ENCODE measurements at regions of chr15 and their contacts with region 1.

Region 1: GRCh38 chr15:34101366-34102175 is at the starts of genes EMC7 and PGBD4:
- DNase-seq: peak; percentile 99
- H3K4me3 ChIP-seq: peak within 1 kb of the TSS; percentile 79
- H3K27ac ChIP-seq: peak within 1 kb of the TSS; percentile 83
- H3K4me1 ChIP-seq: peaks cover 7% of the 10 kb centered on the region
- H3K27me3 ChIP-seq: no peaks in the 10 kb centered on the region
- CTCF ChIP-seq: no peak
- total RNA-seq, gene EMC7: 68.7 and 81.2 TPM in 2 replicates
- total RNA-seq, gene PGBD4: 2.6 and 2.7 TPM in 2 replicates

Region 2: GRCh38 chr15:34011481-34011880 is 90.1 kb before region 1 on chr15:
- CTCF ChIA-PET with region 1: no interaction called
- POLR2A ChIA-PET with region 1: no interaction called
- intact Hi-C with region 1: no loop called
- DNase-seq: no peak
- H3K4me3 ChIP-seq: no peak overlapping the region
- H3K27ac ChIP-seq: no peak overlapping the region
- H3K4me1 ChIP-seq: no peaks in the 10 kb centered on the region
- H3K27me3 ChIP-seq: no peaks in the 10 kb centered on the region
- CTCF ChIP-seq: no peak

Region 3: GRCh38 chr15:34223904-34224596 is 122.5 kb after region 1 on chr15:
- CTCF ChIA-PET with region 1: no interaction called
- POLR2A ChIA-PET with region 1: no interaction called
- intact Hi-C with region 1: loop called (anchors 2 kb)
- DNase-seq: peak; percentile 15
- H3K4me3 ChIP-seq: peak overlapping the region; percentile 69
- H3K27ac ChIP-seq: peak overlapping the region; percentile 91
- H3K4me1 ChIP-seq: peaks cover 8% of the 10 kb centered on the region
- H3K27me3 ChIP-seq: no peaks in the 10 kb centered on the region
- CTCF ChIP-seq: no peak

Region 4: DNA sequence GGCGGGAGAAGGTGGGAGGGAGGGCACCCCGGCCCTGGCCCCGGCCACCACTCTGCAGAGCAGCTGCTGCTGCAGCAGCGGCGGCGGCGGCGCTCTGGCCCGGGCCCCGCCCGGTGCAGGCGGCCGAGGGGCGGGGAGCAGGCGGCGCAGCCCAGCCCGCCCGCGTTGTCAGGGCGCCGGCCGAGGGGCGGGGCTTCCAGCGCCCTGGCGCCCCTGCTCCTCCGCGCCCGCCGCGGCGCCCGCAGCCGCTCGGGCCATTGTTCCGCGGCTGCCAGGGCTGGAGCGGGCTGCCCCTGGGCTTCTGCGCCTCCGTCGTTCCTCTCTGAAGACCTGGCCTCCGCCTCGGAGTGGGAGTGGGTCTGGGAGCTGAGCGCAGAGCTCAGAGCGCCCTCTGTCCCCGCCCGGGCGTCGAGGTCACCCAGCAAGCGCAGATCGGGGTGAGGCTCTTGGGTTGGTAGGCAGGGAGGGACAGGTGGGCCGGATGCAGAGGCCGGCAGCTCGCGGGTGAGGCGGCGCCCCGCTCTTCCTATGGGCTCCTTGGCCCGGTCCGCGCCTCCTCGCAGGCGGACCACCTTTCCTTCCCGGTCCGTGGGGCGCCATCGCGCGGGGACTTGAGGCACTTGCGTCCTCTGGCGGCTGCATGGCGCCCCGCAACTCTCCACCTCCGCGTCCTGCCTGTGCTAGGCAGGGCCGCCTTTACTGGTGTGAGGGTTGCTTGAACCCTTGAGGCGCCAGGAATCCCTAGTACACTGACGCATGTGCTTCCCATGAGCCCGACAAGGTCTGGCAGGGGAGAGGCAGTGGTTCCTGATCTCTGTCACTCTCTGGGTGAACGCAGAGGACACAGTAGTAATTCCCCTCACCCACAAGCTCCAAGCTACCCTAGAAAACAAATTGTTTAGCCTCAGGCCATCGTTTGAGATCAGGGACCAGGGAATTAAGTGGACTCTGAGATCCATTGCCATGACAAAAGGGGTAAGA is 265.8 kb after region 1 on chr15 and contains the start of gene LPCAT4:
- CTCF ChIA-PET with region 1: interaction called, 8 read pairs
- POLR2A ChIA-PET with region 1: no interaction called
- intact Hi-C with region 1: loop called (anchors 10 kb)
- DNase-seq: peak; percentile 92
- H3K4me3 ChIP-seq: peak within 1 kb of the TSS; percentile 82
- H3K27ac ChIP-seq: peak within 1 kb of the TSS; percentile 96
- H3K4me1 ChIP-seq: peaks cover 8% of the 10 kb centered on the region
- H3K27me3 ChIP-seq: no peaks in the 10 kb centered on the region
- CTCF ChIP-seq: peak; percentile 98
- total RNA-seq, gene LPCAT4: 37.8 and 53.1 TPM in 2 replicates